ENCODE measurements at regions of chr16 and their contacts with region 1.

Region 1: DNA sequence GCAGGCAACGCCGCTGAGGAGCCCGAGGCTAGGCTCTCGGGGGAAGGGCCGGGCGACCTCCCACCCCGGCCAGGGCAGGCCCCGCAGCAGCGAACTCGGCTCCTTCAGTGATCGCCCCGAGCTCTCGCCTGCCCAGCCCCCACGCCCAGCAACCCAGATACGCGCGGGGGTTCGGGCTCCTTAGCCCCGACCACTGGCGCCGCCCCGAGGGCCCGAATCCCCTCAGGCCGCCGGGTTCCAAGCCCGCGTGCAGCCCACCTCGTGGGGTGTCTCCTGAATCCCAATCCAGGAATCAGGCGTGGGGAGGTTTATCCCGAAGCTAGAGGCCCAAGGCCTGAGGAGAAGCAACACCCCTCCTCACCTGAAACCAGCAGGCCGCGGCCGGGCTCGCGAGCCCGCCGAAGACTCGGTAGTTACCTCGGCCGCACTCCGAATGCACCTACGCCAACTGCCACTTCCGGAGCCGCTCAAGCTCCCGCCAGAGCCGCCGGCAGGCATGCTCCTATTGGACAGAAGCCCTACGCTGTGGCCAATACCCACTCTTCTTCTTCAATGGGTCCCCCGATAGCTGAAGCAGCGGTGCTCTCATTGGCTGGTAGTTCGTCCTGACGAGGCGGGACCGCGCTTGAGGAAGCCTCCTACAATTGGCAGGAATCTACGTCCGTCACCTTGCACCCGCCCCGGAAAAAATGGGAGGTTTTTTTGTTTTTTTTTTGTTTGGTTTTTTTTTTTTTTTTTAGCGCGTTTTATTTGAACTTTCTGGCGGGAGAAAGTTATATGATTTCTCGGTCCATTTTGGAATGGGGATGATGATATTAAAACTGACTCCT is at the start of gene RFWD3:
- DNase-seq: peak; percentile 88
- ATAC-seq: peak; percentile 100
- H3K4me3 Mint-ChIP-seq: peak within 1 kb of the TSS; percentile 92
- H3K27ac Mint-ChIP-seq: peak within 1 kb of the TSS; percentile 97
- H3K4me1 Mint-ChIP-seq: peaks cover 41% of the 10 kb centered on the region
- H3K27me3 Mint-ChIP-seq: no peaks in the 10 kb centered on the region
- total RNA-seq, gene RFWD3: 110 to 119 TPM

Region 2: GRCh38 chr16:74601126-74601871 is 65.3 kb before region 1 on chr16:
- POLR2A ChIA-PET with region 1: interaction called, 19 read pairs
- DNase-seq: peak; percentile 70
- ATAC-seq: peak; percentile 98
- H3K4me3 Mint-ChIP-seq: peak overlapping the region; percentile 81
- H3K27ac Mint-ChIP-seq: peak overlapping the region; percentile 92
- H3K4me1 Mint-ChIP-seq: peaks cover 58% of the 10 kb centered on the region
- H3K27me3 Mint-ChIP-seq: no peaks in the 10 kb centered on the region

Region 3: DNA sequence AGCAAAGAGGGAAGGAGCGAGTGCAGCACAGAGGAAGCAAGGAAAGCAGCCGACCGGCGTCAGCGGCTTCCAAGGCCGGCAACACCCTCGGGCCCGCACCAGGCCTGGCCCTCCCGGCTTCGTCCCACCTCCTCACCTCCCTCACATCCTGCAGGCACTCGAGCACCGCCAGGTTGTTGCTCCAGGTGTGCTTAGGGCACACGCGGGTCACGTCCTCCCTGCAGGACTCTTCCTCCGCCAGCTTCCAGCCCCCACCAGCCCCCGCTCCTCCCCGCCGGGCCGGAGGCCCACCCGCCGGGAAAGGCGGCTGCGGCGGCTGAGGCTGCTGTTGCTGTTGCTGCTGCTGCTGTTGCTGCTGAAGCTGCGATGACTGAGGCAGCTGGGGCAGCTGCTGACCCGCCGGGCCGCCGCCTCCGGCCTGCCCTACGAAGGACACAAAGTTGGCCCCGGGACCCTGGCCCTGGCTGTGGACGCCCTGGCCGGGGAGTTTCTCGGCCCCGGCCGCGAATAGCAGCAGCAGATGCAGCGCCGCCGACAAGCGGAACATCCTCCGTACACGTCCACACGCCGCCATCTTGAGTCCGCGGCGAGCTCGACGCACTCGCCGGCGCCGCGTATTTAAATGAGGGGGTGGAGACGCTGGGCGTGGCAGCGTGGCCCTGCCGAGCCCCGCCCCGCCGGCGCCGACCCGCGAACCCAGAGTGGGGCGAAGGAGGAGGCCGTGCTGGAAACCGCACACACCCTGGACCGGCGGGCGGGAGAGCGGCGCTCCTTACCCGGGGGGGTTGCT is 59.9 kb before region 1 on chr16 and contains the start of gene GLG1:
- POLR2A ChIA-PET with region 1: interaction called, 19 read pairs
- DNase-seq: peak; percentile 95
- ATAC-seq: peak; percentile 90
- H3K4me3 Mint-ChIP-seq: peak within 1 kb of the TSS; percentile 89
- H3K27ac Mint-ChIP-seq: peak within 1 kb of the TSS; percentile 86
- H3K4me1 Mint-ChIP-seq: peaks cover 47% of the 10 kb centered on the region
- H3K27me3 Mint-ChIP-seq: no peaks in the 10 kb centered on the region
- total RNA-seq, gene GLG1: 118 to 120 TPM

Region 4: GRCh38 chr16:74650966-74651567 is 15.6 kb before region 1 on chr16:
- POLR2A ChIA-PET with region 1: interaction called, 19 read pairs
- DNase-seq: no peak
- ATAC-seq: no peak
- H3K4me3 Mint-ChIP-seq: no peak overlapping the region
- H3K27ac Mint-ChIP-seq: no peak overlapping the region
- H3K4me1 Mint-ChIP-seq: peaks cover 19% of the 10 kb centered on the region
- H3K27me3 Mint-ChIP-seq: no peaks in the 10 kb centered on the region

Region 5: DNA sequence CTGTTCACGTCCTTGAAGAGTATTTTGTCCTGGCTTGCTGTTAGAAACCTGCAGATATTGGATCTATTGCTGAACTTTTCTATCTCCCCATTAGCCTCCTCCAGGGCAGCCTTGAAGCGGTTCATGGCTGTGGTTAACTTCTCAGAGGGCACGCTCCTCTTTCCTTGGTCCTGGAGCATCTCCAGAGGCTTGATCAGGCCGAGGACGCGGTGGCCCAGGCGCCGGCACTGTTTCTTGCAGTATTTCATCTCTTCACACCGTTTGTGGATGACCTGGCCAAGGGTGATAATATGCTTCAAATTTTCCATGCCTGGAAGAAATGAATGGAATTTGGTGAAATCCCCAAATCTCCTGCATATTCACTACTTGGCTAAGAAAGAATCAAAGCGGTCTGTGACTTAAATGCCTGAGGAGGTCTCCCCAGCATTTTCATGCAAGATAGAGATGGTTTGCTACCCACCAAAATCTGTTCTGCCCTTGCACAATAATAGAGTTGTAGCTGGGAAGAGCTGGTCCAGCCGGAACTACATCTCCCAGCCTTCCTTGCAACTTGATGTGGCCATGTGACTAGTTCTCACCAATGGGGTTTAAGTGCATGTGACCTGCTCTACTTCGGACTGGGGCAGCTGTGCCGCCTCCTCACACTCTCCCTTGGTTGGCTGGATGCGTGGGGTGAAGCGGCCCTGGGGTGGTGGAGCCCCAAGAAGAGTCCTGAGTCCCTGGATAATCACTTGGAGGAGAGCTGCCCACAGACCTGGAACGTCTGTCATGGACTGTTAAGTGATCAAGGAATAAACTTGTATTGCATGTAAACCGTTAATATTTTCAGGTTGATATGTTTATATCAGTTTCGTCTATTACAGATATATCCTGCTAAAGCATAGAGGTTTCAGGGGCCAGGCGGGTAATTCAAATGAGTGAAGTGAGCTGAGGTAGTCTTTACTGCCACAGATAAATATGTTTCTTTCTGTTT is 29.1 kb after region 1 on chr16:
- POLR2A ChIA-PET with region 1: interaction called, 64 read pairs
- DNase-seq: peak; percentile 54
- ATAC-seq: peak; percentile 73
- H3K4me3 Mint-ChIP-seq: peak overlapping the region; percentile 86
- H3K27ac Mint-ChIP-seq: peak overlapping the region; percentile 87
- H3K4me1 Mint-ChIP-seq: peaks cover 28% of the 10 kb centered on the region
- H3K27me3 Mint-ChIP-seq: no peaks in the 10 kb centered on the region

Region 6: DNA sequence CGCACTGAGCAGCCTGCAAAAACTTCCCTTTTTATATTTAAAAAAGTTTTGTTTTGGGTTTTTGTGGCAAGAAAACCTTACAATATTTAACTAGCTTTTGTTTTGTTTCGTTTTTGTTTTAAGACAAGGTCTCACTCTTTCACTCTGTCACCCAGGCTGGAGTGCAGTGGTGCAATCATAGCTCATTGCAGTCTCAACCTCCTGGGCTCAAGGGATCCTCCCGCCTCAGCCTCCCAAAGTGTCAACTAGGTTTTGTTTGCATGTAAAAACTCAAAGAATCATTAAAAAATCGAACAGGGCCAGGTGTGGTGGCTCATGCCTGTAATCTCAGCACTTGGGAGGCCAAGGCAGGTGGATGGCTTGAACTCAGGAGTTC is 185.8 kb after region 1 on chr16:
- POLR2A ChIA-PET with region 1: no interaction called
- DNase-seq: no peak
- ATAC-seq: no peak
- H3K4me3 Mint-ChIP-seq: no peak overlapping the region
- H3K27ac Mint-ChIP-seq: no peak overlapping the region
- H3K4me1 Mint-ChIP-seq: no peaks in the 10 kb centered on the region
- H3K27me3 Mint-ChIP-seq: no peaks in the 10 kb centered on the region

Measured in activated naive CD8-positive, alpha-beta T cell treated with anti-CD3 and anti-CD28 coated beads, Interleukin-2, amount 10 ng/mL, durations not matched to agents 7 days and 5 days (primary cell).